ENCODE measurements at regions of chr14 and their contacts with region 1.

Region 1: GRCh38 chr14:58244556-58245387 is at the start of gene PSMA3:
- DNase-seq: peak; percentile 94

Region 2: GRCh38 chr14:58088961-58089360 is 155.8 kb before region 1 on chr14:
- CTCF ChIA-PET with region 1: no interaction called
- POLR2A ChIA-PET with region 1: no interaction called
- DNase-seq: no peak

Region 3: DNA sequence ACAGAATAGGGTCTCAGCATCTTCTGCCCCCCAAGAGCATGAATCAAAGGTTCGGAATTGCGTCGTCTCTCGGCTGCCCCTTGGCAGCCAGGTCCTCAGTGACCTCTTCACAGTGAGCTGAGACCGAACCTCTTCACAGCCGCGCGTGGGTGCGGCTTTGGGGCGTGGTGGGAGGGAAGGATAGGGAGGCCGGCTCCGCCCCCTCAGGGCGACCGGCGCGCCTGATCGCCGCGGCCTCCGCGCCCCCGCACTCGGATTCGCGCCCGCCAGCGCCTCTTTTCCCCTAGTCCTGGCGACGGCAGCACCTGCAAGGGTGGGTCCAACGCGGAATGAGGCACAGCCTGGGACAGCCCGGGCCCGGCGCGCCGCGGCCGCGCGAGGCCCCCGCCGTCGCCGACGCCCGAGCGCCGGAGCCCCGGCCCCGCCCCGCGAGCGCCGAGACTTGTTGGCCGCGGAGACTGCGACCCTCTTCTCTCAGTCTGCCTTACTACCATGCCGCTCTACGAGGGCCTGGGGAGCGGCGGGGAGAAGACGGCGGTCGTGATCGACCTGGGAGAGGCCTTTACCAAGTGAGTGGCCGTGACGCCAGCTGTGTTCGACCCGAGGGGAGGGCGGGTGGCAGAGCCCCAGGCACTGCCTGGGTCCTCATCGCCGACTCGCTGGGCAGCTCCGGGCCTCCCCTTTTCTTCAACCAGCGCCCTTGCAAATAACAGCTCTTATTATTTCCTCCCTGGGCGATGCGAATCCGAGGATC is 44.9 kb before region 1 on chr14 and contains the start of gene ACTR10:
- CTCF ChIA-PET with region 1: no interaction called
- POLR2A ChIA-PET with region 1: interaction called, 13 read pairs
- DNase-seq: peak; percentile 84

Region 4: DNA sequence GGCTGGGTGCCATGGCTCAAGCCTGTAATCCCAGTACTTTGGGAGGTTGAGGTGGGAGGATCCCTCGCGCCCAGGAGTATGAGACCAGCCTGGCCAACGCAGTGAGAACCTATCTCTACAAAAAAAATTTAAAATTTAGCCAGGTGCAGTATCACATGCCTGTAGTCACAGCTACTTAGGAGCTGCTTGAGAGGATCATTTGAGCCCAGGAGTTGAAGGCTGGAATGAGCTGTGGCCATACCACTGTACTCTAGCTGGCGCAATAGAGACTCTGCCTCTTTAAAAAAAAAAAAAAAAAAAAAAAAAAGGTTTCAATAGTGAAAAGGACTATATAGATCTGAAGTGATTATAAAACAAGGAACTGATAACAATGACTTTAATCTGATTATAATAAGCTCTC is 13.4 kb after region 1 on chr14:
- CTCF ChIA-PET with region 1: no interaction called
- POLR2A ChIA-PET with region 1: interaction called, 11 read pairs
- DNase-seq: no peak

Region 5: DNA sequence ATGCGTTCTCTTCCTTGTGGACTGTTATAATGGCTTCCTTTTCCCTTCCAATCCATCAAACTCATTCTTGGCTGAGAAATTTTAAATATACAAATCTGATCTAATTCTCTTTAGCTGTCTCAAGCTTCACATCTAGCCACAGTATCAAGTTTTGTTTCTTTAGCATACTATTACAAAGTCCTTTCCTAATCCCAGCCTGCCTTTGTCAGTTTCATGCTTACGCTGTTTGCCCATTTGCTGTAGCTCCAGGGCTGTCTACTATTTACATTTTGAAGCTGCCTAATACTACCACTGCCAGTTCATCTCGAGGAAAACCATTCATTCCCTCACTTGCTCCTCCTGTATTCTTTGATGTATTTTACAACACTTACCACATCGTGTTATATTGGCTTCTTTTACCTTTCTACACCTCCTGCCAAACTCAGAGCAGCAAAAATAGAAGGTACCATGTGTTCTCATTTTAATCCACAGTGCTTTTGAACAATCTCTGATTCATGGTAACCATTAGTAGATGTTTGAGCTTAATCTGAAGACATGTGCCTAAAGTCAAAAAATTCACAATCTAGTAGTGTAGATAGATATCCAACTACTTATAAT is 96.5 kb after region 1 on chr14:
- CTCF ChIA-PET with region 1: no interaction called
- POLR2A ChIA-PET with region 1: no interaction called
- DNase-seq: no peak

Measured in HEK293T (cell line).